ENCODE measurements at regions of chr16 and their contacts with region 1.

Region 1: DNA sequence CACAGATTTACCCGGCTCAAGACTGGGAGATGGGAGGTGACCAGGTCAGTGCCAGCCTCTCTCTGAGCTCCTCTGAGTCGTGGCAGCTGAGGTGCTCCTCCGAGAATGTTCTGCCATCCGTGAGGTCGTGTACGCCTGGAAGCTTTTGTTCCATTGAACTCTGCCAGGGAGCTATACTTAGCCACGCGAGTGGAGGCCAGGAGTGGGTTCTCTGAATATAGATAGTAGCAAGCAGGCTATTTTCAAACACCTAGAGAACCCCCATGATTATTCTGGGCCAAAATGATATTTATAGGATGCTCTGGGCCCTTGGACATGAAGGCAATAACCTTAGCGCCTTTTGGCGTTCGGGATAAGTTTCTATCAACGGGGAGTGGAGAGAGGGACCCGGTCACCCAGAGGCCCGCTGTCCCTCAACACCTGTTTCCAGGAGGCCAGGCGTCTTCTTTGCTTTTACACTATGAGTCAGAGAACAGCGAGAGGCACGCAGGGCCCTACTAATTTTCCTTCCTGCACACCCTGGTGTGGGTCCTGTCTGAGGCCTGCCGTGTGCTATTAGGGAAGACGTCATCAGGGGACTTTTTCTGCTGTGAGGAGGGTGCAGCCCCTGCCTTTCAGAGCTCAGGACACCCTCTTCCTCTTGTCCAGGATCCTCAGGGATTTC is 11.0 kb upstream of the MVD start:
- DNase-seq: peak; percentile 39 to 66
- ATAC-seq: peak; percentile 79 to 85
- H3K4me3 ChIP-seq: peak overlapping the region in 1 of 4 donors; percentile 2
- H3K27ac ChIP-seq: peak overlapping the region; percentile 75 to 84 (median 82)
- H3K4me1 ChIP-seq: peaks cover 46 to 57% of the 10 kb centered on the region in 2 donors
- H3K27me3 ChIP-seq: no peaks in the 10 kb centered on the region
- CTCF ChIP-seq: no peak
- POLR2A ChIP-seq: peak in 1 of 2 donors; percentile 16

Region 2: GRCh38 chr16:88686439-88687253 is 12.8 kb after region 1 on chr16 and contains the start of gene SNAI3:
- in situ Hi-C with region 1: no loop called
- intact Hi-C with region 1: loop called (anchors 1 kb)
- DNase-seq: peak; percentile 78 to 87
- ATAC-seq: peak; percentile 80
- H3K4me3 ChIP-seq: peak within 1 kb of the TSS; percentile 68 to 83 (median 75)
- H3K27ac ChIP-seq: peak within 1 kb of the TSS; percentile 82 to 96 (median 88)
- H3K4me1 ChIP-seq: peaks cover 16 to 31% of the 10 kb centered on the region in 2 donors
- H3K27me3 ChIP-seq: no peaks in the 10 kb centered on the region
- CTCF ChIP-seq: no peak
- POLR2A ChIP-seq: peak; percentile 73 to 75
- total RNA-seq, gene SNAI3: 1.2 to 2.2 (median 1.6) TPM